ENCODE measurements at regions of chr3 and their contacts with region 1.

Region 1: GRCh38 chr3:59857589-59858346 is 807.9 kb upstream of the CFAP20DC start:
- DNase-seq: peak; percentile 76 to 78 (median 77)
- ATAC-seq: peak; percentile 100
- H3K4me3 ChIP-seq: no peak overlapping the region
- H3K27ac ChIP-seq: no peak overlapping the region
- H3K4me1 ChIP-seq: no peaks in the 10 kb centered on the region
- H3K27me3 ChIP-seq: no peaks in the 10 kb centered on the region
- CTCF ChIP-seq: peak; percentile 86 to 95 (median 89)
- POLR2A ChIP-seq: no peak

Region 2: DNA sequence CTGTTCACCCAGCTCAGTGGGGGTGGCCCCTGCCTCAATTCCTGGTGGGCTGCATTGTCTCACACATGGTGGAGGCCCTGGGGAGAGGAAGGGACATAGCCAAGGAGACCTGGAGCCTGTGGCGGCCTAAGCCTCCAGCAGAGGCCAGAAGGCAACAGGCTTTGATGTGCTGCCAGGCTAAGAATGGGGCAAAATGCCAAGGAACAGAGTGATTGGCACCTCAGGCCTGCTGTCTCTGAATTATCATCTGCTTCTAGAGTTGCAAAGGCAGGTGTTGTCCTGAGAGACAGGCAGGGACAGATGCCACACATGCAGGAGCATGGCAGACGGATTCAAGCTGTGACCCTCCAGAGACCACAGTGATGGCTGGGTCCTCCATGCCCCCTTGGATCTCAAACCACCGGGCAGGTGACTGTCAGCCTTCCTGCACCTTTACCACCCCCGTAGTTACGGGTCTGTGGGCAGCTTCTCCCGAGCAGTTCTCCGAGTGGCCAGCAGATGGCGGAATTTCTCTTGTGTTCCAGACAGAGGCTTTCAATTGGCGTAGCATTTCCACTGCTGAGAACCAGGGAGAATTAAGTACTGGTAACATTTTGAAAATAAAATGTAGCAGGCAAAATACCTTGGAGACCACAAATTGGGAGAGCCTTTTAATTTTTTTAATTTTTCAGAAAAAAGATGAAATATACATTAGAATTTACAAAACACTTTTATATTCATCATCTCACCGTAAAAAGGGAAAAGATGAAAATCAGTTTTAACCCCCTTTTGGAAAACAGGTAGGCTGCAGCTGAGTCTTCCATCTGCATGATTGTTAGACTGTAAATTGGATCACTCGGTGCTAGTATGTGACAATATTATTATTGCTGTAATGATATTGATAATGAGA is 282.4 kb before region 1 on chr3:
- intact Hi-C with region 1: loop called in 1 of 2 experiments (anchors 10 kb)
- DNase-seq: peak; percentile 84 to 86 (median 86)
- ATAC-seq: peak; percentile 88 to 91 (median 90)
- H3K4me3 ChIP-seq: no peak overlapping the region
- H3K27ac ChIP-seq: no peak overlapping the region
- H3K4me1 ChIP-seq: no peaks in the 10 kb centered on the region
- H3K27me3 ChIP-seq: no peaks in the 10 kb centered on the region
- CTCF ChIP-seq: peak; percentile 87 to 95 (median 94)
- POLR2A ChIP-seq: no peak

Region 3: DNA sequence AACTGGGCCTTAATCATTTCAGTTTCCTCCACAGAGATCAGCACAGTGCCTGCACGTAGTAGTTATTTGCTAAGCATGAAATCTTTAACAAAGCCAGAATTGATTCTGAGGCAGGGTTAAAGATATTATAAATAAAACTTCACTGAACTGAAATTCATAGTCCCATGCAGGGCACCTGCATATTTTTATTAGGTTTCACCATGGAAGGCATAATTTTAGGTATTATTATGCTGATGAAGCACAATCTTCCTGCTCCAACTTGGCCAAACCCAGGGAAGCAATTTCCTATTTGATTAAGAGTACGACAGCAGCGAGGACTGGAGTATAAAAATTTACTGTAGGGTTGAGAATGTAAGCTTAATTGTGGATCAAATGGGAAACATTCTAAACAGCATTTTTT is 262.5 kb after region 1 on chr3:
- intact Hi-C with region 1: no loop called
- DNase-seq: no peak
- ATAC-seq: no peak
- H3K4me3 ChIP-seq: no peak overlapping the region
- H3K27ac ChIP-seq: no peak overlapping the region
- H3K4me1 ChIP-seq: no peaks in the 10 kb centered on the region
- H3K27me3 ChIP-seq: no peaks in the 10 kb centered on the region
- CTCF ChIP-seq: no peak
- POLR2A ChIP-seq: no peak